Dorsolateral prefrontal cortex (tissue), 120 donors: ENCODE measurements at regions of chr22 and their contacts with region 1.

Region 1: DNA sequence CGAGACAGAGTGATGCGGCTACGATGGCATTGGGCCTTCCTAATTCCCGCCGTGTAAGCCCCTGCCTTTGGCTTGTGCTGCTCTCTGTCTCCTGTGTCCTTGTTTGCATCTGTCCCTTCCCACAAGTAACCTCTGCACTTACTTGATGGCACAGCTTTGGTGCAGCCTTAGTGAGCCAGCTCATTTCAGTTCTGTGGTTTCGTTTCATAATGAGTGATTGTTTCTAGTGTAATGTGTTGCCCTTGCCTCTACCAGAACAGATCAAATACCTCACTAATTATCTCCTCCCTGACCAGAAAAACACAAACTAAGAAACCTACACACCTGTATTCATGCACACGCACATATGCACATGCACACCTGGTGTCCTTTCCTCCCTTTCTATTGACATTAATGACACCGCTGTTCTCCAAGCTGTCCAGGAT is 58.8 kb downstream of the GRK3 start:
- DNase-seq: no peak
- H3K4me3 ChIP-seq: no peak overlapping the region
- H3K27ac ChIP-seq: no peak overlapping the region
- H3K27me3 ChIP-seq: no peaks in the 10 kb centered on the region
- CTCF ChIP-seq: no peak

Region 2: DNA sequence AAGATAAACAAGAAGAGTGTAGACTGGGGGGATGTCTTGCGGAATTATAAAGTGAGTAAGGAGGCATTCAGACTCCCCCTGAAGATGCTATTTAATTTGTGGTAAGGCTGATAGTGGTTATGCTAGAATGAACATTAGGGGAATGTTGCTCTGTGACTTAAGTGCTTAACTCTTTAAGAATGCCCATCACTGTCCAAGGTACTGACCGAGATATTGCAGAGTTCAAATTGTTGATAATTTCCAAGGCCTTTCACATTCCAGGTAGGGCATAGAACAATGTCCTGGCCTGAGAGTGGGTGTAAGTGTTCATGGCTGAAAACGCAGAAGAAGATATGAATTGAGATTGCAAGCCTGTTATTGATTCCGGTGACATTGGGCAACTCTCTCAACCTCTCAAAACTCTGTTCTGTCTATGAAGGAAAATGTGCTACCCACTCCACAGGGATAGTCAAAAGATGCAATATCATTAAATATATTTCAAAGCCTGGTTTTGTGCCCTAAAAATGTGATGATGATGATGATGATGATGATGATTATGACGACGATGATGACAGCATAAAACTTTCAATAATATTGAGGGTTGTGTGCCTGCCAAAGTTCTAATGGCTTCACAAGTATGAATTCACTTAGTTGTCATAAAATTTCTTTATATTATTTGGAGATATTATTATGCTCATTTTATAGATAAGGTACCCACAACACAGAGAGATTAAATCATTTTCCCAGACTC is 455.9 kb after region 1 on chr22:
- intact Hi-C with region 1: loop called in 1 of 2 experiments (anchors 10 kb)
- DNase-seq: no peak
- H3K4me3 ChIP-seq: no peak overlapping the region
- H3K27ac ChIP-seq: no peak overlapping the region
- H3K27me3 ChIP-seq: peaks cover 0 to 17% (median 0%) of the 10 kb centered on the region in 45 donors
- CTCF ChIP-seq: no peak